ENCODE measurements at regions of chrX and their contacts with region 1.

Region 1: GRCh38 chrX:12701628-12702027 is 89.6 kb upstream of the PRPS2 start:
- DNase-seq: peak; percentile 58
- ATAC-seq: peak; percentile 78
- H3K4me3 Mint-ChIP-seq: no peak overlapping the region
- H3K27ac Mint-ChIP-seq: no peak overlapping the region
- H3K4me1 Mint-ChIP-seq: peaks cover 13% of the 10 kb centered on the region
- H3K27me3 Mint-ChIP-seq: no peaks in the 10 kb centered on the region
- CTCF ChIP-seq: peak; percentile 46; the same call in 1 of the 2 replicates

Region 2: DNA sequence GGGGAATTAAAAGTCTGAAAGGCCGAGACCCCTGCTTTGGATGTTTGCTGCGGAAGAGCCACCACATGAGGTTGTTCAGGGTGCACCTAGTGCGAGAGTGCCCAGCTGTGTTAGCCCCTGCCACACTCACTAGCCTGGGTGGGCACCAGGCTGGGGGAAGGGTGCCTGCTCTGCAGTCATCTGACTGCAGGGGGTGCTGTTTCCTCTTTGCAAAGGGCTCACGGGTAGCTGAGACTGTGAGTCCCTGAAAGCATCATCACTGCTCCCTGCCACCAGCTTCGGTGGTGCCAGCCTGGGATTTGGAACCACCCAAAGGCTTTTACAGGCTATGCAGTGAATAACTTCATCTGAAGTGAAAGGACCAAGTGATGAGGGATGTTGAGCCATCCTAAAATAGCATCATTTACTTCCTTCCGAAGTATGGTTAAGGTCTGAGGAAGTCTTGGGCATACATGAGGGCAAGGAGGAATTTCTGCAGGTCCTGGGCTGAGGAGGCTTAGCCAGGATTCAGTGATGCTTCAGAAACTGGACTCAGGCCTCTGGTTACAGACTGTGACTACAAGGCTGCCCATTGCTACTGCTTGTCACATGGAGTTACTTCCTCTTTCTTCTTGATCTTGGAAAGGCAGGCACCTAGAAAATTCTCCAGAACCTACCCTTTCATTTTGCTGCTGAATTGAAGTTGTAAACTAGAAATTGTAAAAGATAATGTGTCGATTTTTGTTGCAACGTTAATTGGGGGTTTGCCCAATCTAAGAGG is 203.6 kb before region 1 on chrX:
- CTCF ChIA-PET with region 1: interaction called, 20 read pairs
- POLR2A ChIA-PET with region 1: no interaction called
- DNase-seq: peak; percentile 60
- ATAC-seq: peak; percentile 90
- H3K4me3 Mint-ChIP-seq: no peak overlapping the region
- H3K27ac Mint-ChIP-seq: no peak overlapping the region
- H3K4me1 Mint-ChIP-seq: peaks cover 2% of the 10 kb centered on the region
- H3K27me3 Mint-ChIP-seq: no peaks in the 10 kb centered on the region
- CTCF ChIP-seq: peak; percentile 57

Region 3: DNA sequence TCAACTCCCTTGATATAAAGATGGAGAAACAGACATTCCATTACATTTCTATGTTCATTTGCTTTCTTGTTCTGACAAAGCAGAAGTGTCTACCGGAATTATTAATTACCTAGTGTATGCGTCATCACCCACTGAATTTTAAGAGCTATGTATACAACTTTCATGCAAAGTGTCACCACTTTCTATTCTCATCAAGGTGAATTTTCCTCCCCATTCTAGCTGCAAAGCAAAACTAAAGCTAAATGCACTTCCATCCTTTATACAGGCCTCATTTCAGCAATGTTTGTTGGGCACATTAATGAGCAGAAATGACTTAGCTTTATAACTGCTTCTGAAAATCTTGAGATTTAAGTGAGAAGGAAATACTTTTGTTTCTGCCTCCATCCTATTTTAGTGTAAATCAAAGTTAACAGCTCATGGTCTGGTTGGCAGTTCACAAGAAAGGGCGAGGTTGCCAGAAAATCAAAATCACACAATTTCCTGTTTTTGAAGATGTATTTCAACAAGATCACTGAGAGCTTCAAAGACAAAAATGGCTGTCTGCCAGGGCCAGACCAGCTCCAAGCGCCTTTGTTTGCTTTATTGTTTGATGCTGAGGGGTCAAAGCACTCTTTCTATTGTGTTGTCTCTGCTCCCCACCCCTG is 350.0 kb after region 1 on chrX:
- CTCF ChIA-PET with region 1: no interaction called
- POLR2A ChIA-PET with region 1: no interaction called
- DNase-seq: no peak
- ATAC-seq: no peak
- H3K4me3 Mint-ChIP-seq: no peak overlapping the region
- H3K27ac Mint-ChIP-seq: no peak overlapping the region
- H3K4me1 Mint-ChIP-seq: peaks cover 2% of the 10 kb centered on the region; the same call in 1 of the 2 replicates
- H3K27me3 Mint-ChIP-seq: no peaks in the 10 kb centered on the region; the same call in 1 of the 2 replicates
- CTCF ChIP-seq: no peak